ENCODE measurements at regions of chr11 and their contacts with region 1.

Region 1: DNA sequence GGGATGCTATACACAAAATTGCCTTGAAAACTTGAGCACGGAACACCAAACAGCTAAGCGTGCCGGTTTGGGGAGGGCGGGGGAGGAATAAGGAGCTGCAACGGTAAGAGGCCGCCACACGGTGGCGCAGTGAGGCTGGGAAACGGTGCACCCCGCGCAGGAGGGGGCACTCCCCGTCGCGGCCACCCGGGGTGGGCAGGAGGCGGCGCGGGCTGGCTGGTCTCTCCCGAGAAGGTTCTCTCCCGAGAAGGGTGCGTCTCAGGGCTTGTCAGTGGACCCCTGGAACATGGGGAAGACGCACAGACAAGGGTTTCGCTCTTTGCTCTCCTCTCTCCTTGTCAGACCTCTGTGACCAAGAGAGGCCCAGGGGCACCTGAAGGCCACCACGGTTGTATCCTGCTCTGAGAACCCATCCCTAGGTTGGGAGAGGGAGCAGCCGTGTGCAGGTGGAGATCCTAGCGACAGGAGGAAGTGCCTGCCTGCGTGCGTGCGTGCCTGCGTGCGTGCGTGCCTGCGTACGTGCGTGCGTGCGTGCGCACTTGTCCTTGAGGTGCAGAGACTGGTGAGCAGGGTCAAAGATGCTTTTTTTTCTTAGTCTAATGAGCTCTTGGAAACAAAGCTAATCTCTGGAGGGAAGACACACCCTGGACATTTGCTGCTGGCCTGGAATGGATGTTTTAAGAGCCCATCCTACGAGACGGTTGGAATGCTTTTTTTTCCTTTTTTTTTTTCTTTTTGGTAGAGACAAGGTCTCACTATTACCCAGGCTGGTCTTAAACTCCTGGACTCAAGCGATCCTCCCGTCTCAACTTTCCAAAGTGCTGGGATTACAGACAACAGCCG is 18.1 kb upstream of the JAM3 start:
- DNase-seq: peak; percentile 70 to 88 (median 76)
- ATAC-seq: peak; percentile 57 to 82 (median 78)
- H3K4me3 ChIP-seq: peak overlapping the region in 9 of 12 donors; percentile 9 to 46 (median 29)
- H3K27ac ChIP-seq: no peak overlapping the region
- H3K4me1 ChIP-seq: peaks cover 0 to 36% (median 10%) of the 10 kb centered on the region in 12 donors
- H3K27me3 ChIP-seq: no peaks in the 10 kb centered on the region
- CTCF ChIP-seq: peak; percentile 88 to 98 (median 94)
- POLR2A ChIP-seq: no peak

Region 2: DNA sequence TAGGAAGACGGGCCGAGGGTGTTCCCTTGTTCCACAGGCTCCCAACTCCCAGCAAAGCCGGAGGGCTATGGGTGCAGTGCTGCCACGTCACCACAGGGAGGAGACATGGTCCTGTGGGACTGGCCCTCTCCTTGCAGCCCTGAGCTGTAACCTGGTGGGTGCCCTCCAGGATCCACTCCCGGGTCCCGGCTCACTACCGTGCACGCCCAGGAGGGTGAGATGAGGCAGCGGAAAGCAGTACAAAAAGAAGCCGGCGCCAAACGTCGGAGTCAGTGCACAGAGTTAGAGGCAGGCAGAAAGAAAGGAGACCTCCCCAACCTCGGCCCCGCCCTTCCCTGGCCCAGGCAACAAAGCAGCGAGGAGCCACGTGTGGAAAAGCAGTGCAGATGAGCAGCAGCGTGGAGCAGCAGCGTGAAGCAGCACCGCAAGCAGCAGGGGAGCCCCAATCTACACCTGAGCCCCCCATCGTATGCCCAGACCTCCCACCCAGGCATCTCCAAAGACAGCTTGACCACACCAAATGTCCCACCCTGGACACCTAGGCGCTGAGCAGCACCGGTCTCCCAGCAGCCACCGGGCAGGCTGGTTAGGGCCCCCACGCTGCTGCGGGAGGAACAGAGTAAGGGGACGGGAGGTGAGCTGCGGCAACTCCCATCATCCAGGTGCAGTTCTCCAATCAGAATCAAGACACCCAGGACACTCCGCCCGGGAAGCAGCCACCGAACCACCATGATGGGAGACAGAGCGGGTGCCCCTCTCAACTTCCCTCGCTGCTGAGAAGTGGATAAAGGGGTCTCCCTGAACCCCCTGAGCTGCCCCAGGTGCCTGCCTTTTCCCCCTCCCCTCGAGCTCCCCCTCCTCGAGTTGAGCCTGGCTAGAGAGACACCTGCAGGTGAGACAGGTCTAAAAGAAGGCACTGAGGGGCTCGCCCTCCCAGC is 122.8 kb before region 1 on chr11:
- intact Hi-C with region 1: loop called in 8 of 10 experiments (anchors 2 to 10 kb)
- DNase-seq: peak; percentile 56 to 81 (median 70)
- ATAC-seq: peak; percentile 76 to 83 (median 80)
- H3K4me3 ChIP-seq: peak overlapping the region in 4 of 12 donors; percentile 17 to 35 (median 25)
- H3K27ac ChIP-seq: no peak overlapping the region
- H3K4me1 ChIP-seq: peaks cover 0 to 15% (median 12%) of the 10 kb centered on the region in 12 donors
- H3K27me3 ChIP-seq: no peaks in the 10 kb centered on the region
- CTCF ChIP-seq: peak; percentile 75 to 95 (median 86)
- POLR2A ChIP-seq: no peak

Region 3: DNA sequence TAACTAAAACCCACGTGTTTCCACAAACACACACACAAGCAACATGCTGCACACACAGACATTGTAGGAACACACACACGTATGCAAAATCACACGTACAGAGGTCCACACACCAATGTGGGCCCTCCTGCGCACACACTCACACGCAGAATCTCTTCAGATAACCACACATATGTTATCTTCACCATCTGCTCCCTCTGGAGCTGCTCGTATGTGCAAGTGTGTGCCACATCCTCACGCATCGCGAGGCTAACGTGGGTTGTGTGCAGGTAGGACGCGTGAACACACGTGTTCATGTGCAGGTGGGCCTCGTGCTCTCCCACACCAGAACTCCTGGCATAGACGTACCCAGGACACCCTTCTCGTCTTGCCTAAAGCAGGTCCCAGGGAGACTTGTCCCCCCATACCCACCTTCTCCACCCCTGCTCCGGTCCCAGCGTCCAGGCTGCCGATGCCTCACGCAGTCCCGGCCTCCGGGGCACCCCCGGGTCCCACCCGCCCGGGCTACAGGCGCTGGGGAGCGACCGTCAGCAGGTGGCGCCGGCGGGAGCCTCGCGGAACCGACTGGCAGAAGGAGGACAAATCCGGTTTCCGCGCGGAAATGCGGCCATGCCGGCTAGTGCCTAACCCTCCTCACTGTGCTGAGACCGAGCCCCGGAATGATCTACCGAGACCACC is 83.7 kb before region 1 on chr11:
- intact Hi-C with region 1: loop called in 1 of 10 experiments (anchors 1 kb)
- DNase-seq: peak; percentile 65 to 85 (median 73)
- ATAC-seq: peak; percentile 25 to 78 (median 69)
- H3K4me3 ChIP-seq: peak overlapping the region in 9 of 12 donors; percentile 33 to 54 (median 41)
- H3K27ac ChIP-seq: peak overlapping the region in 2 of 12 donors; percentile 17 to 29
- H3K4me1 ChIP-seq: peaks cover 0 to 10% (median 3%) of the 10 kb centered on the region in 12 donors
- H3K27me3 ChIP-seq: peaks cover 0 to 5% (median 0%) of the 10 kb centered on the region in 9 donors
- CTCF ChIP-seq: peak; percentile 53 to 78 (median 66)
- POLR2A ChIP-seq: no peak

Region 4: DNA sequence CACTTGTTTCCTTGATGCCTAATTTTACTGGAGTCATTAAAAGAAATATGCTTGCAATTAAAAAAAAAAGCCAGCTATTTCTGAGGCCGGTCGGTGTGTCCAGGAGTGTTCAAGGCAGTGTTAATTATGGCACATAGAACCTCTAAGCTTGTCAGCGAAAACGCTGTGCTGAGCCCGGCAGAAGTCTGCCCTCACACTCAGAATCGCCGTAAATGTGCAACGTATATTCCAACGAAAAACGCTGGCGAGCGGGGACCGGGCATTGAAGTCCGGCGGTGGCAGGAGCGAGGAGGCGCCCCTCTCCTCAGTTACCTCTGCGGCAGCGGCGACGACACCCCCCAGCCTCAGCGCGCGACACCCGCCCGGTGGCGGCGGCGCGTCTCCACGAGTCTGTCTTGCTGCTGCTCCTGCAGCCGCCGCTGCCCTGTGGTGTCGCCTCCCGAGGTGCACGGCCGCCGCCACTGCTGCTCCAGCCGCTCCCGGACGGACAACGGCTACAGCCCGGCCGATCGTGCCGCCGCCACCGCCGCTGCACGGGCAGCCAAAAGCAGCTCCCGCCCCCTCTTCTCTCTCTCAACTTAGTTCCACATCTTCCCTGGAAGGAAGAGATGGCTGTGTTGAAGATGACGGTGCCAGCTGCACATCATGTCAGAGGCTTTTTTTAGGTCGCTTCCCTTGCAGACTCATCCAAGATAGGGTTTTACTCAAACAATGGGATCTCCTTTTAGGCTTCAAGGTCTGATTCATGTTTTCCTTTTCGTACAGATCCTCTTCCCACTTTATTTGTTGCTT is 74.1 kb after region 1 on chr11:
- intact Hi-C with region 1: loop called in 2 of 10 experiments (anchors 5 kb)
- DNase-seq: peak; percentile 62 to 79 (median 66)
- ATAC-seq: peak; percentile 54 to 75 (median 66)
- H3K4me3 ChIP-seq: peak overlapping the region; percentile 28 to 68 (median 54)
- H3K27ac ChIP-seq: peak overlapping the region; percentile 55 to 85 (median 76)
- H3K4me1 ChIP-seq: peaks cover 6 to 64% (median 48%) of the 10 kb centered on the region in 12 donors
- H3K27me3 ChIP-seq: peaks cover 0 to 8% (median 0%) of the 10 kb centered on the region in 9 donors
- CTCF ChIP-seq: peak in 4 of 12 donors; percentile 5 to 42 (median 32)
- POLR2A ChIP-seq: no peak

Region 5: DNA sequence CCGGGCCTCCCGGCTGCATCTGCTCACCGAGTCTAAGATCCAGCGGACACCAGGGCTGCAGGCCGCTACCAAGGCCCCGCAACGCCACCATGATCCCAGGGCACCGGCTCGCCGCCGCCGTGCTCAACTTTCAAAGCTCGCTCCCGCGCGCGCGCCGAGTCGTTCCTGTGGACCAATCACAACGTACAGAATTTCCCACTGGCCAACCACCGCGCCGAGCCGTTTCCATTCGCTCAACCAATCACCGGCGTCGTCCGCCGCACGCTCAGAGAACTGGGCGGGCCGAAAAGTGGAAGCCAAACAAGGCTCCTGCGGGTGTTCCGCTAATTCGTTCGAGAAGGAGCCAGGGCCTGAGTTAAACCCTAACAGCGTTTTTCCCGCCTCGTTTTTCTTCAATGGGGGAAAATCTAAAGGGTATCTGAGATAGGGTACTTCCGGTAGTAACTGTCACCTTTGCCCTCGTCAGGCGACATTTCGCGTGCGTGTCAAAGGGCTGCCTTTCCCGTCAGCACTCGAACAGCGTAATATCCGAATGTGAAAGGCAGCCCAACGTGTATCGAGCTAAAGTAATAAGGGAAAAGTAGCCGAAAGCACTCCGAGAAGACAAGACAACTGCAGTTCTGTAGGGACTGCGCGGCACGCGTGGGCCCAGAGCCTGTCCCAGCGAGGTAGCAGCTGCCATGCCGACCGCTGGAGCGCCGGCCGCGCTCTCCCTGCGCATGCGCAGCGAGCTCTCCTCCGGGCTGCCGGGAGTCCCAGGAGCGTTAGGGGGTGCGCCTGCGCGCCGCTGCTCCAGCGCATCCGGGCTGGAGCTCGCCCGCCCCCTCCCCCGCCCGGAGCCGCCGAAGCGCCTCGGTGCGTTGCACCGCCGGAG is 173.3 kb after region 1 on chr11 and contains the starts of genes NCAPD3 and VPS26B:
- intact Hi-C with region 1: loop called in 2 of 10 experiments (anchors 5 to 10 kb)
- DNase-seq: peak; percentile 97 to 98 (median 97)
- ATAC-seq: peak; percentile 91 to 97 (median 94)
- H3K4me3 ChIP-seq: peak within 1 kb of the TSS; percentile 64 to 95 (median 78)
- H3K27ac ChIP-seq: peak within 1 kb of the TSS; percentile 90 to 98 (median 94)
- H3K4me1 ChIP-seq: peaks cover 4 to 47% (median 35%) of the 10 kb centered on the region in 12 donors
- H3K27me3 ChIP-seq: no peaks in the 10 kb centered on the region
- CTCF ChIP-seq: no peak
- POLR2A ChIP-seq: peak; percentile 29 to 95
- total RNA-seq, gene NCAPD3: 9.4 to 18.8 (median 11.0) TPM
- total RNA-seq, gene VPS26B: 35.0 to 49.6 (median 37.8) TPM

Region 6: GRCh38 chr11:134244655-134245054 is 193.9 kb after region 1 on chr11:
- intact Hi-C with region 1: no loop called
- DNase-seq: no peak
- ATAC-seq: peak in 2 of 4 donors; percentile 24 to 38
- H3K4me3 ChIP-seq: no peak overlapping the region
- H3K27ac ChIP-seq: no peak overlapping the region
- H3K4me1 ChIP-seq: no peaks in the 10 kb centered on the region
- H3K27me3 ChIP-seq: no peaks in the 10 kb centered on the region
- CTCF ChIP-seq: peak in 8 of 12 donors; percentile 5 to 37 (median 28)
- POLR2A ChIP-seq: no peak